ENCODE measurements at regions of chr6 and their contacts with region 1.

Region 1: DNA sequence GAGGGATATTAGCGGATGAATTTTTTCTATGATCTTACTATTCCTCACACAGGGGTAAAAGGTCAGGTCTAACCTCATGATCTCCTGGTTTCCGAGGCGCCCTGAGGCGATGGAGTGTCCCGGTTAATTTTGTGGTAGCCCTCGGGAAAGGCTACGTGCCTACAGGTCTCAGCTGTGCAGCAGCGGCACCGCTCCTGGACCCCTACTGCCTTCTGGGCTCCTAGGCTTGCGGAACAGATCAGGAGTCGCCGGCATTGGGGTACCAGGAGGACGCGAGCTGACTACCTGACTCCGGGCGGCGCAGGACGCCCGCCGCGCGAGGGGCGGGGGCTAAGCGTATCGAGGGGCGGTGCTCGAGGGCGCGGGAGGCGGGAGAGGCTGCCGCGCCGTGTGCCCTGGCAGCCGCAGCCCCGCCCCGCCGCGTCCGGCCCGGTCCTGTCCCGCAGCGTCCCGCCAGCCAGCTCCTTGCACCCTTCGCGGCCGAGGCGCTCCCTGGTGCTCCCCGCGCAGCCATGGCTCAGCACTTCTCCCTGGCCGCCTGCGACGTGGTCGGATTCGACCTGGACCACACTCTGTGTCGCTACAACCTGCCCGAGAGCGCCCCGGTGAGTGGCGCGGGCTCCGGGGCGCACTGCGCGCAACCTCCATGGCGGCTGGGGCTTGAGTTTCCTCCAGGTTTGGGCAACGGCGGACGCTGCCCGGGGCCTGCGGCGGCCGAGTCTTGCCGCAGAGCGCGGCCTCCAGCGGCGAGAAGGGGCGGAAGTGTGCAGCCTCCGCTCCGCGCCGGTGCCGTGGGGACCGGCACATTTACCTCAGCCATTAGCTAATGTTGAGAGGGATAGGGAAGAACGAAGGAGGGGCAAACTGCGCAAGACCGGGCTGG is at the start of gene NT5DC1:
- DNase-seq: peak; percentile 86 to 91
- ATAC-seq: peak; percentile 94
- total RNA-seq, gene NT5DC1: 43.7 to 45.2 TPM

Region 2: DNA sequence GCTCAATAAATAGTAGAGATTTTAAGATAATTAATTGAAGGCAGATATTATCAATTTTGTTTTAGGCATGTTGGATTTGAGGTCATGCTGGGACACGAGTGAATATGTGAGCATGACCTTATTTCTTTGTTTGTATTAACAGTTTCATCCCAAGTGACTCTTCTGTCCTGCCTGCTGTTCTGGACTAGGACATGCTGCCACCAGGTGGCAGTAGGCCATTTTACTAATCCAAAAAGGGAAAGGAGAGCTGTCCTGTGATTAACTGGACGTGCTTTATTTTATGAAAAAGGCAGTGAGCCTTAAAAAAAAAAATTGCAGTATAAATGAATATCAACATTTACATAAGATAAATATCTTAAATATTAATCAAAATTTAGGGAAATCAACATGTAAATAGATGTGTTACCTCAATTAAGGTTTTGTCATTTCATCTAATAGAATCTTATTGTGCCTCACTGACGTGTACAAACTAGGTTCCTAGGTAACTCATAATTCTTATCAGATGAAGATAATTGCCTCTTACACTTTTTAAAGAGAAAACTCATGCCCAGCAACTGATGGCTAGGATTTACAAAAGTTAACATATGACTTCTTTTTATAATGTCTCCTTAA is 89.8 kb before region 1 on chr6:
- intact Hi-C with region 1: loop called in 1 of 2 experiments (anchors 5 kb)
- DNase-seq: peak; percentile 64 to 87
- ATAC-seq: peak; percentile 70